ENCODE measurements at regions of chr19 and their contacts with region 1.

Region 1: DNA sequence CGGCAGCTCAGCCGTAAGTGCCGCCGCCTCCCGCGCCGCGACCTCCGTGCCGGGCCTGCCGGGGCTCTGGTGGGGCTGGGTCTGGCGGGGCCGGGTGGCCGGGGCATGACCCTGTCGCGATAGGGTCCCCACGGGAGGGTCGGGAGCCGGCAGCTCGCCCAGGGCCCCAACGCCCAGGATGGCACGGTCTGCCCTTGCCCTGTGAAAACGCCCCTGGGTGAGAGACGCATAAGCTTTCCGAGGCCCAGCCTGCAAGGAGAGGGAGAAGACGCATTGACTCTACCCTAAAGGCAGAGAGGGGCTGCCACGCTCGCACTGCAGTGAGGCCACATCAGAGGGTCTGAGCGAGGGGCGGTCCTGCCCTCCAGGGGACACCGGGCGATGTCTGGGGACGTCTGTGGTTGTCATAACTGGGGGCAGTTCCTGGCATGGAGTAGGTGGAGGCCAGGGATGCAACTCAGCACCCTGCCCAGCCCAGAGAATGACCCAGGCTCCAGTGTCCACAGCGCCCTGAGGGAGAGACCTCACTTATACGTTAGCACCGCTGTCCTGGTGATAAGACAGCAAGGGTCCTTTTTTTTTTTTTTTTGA is 539 bp downstream of the ZNF554 start:
- DNase-seq: no peak
- ATAC-seq: peak; percentile 18
- H3K4me3 ChIP-seq: peak overlapping the region; percentile 64 to 83 (median 74)
- H3K27ac ChIP-seq: peak overlapping the region; percentile 36 to 78 (median 62)
- H3K4me1 ChIP-seq: peaks cover 0 to 8% of the 10 kb centered on the region in 2 donors
- H3K27me3 ChIP-seq: no peaks in the 10 kb centered on the region
- CTCF ChIP-seq: no peak
- POLR2A ChIP-seq: no peak

Region 2: DNA sequence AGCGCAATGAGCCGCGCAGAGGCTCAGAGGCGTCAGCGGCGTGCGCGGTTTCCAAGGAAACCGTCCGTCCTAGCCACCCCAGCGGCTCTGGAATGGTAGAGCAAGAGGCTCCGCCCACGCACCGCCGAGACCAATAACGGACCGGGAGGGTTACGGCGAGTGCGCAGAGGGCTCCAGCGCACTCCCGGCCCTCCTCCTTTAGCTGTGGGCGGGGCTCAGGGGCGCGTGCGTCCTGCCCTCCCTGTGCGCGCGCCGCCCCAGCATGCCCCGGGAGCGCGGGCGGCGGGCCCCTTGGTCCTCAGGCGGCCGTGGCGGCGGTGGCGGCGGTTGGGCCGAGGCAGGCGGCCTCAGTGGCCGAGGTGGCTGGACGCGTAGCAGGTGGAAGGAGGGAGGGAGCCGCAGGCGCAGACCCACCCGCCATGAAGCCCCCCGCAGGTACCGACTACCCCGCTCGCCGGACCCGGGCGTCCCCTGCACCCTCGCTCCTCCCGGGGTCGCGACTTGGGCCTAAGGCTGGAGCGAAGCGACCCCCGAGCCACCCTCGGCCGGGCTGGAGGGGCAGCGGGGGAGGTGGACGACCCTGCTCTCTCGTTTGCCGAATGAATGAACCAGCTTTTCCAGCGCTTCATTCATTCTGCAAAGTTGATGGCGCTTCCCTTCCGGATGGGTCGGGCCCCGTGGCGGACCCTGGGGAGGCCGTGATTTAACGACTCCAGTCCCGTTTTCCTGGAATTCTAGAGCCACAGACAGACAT is 34.8 kb before region 1 on chr19 and contains the start of gene THOP1:
- in situ Hi-C with region 1: no loop called
- intact Hi-C with region 1: loop called (anchors 1 kb)
- DNase-seq: peak; percentile 95 to 98
- ATAC-seq: peak; percentile 80 to 83
- H3K4me3 ChIP-seq: peak within 1 kb of the TSS; percentile 83 to 97 (median 87)
- H3K27ac ChIP-seq: peak within 1 kb of the TSS; percentile 68 to 78 (median 72)
- H3K4me1 ChIP-seq: peaks cover 41 to 45% of the 10 kb centered on the region in 2 donors
- H3K27me3 ChIP-seq: no peaks in the 10 kb centered on the region
- CTCF ChIP-seq: no peak
- POLR2A ChIP-seq: peak; percentile 33 to 54
- total RNA-seq, gene THOP1: 31.5 to 114 (median 73.0) TPM

Region 3: DNA sequence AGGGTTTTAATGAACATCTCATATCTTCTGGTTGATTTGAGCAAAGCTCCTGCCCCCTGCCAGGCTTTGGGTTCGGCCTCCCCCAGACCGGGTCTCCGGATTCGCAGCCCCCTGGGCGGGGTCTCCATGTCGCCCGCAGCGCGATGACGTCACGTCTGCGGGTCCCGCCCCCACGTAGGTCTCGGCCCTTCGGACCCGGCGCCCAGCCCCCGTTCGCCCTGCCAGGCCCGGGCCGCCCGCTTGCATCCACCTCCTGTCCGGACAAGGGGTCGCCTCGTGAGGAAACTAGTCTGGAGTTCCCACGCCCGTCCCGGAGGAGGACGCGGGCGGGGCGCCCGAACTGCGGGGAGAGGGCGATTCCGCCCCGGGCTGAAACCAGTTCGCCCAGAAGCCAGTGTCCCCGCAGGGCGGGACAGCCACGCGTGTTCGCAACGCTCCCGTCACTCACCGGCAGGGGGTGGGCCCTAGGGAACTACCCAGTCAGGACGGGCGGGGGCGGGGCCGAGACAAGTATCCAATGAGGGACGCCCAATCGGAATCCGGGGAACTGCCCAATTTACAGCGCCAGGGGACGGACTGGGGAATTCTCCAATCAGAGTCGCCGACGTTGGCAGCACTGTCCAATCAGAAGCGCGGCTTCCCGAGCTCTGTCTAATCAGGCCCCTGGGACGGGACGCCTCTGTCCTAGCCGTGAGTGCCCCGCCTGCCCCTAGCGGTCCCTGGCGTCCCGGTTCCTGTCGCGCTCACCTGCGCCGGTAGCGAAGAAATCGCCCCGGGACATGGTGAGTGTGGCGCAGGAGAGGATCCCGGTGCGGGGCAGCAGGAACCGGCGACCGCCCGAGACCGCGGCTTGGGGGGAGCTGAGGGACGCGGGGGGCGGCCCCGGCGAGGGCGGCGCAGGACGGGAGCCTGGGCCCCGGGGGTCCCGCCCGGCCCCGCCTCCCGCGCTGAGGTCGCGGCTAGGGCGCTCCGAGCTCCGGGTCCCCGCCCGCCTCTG is 20.9 kb after region 1 on chr19 and contains the start of gene ZNF555:
- in situ Hi-C with region 1: no loop called
- intact Hi-C with region 1: loop called (anchors 1 kb)
- DNase-seq: peak; percentile 99
- ATAC-seq: peak; percentile 99
- H3K4me3 ChIP-seq: peak within 1 kb of the TSS; percentile 69 to 85 (median 74)
- H3K27ac ChIP-seq: peak within 1 kb of the TSS; percentile 80 to 92 (median 86)
- H3K4me1 ChIP-seq: peaks cover 15 to 20% of the 10 kb centered on the region in 2 donors
- H3K27me3 ChIP-seq: no peaks in the 10 kb centered on the region
- CTCF ChIP-seq: peak; percentile 38 to 75 (median 68)
- POLR2A ChIP-seq: peak; percentile 56 to 79
- total RNA-seq, gene ZNF555: 1.9 to 5.5 (median 2.7) TPM

Region 4: DNA sequence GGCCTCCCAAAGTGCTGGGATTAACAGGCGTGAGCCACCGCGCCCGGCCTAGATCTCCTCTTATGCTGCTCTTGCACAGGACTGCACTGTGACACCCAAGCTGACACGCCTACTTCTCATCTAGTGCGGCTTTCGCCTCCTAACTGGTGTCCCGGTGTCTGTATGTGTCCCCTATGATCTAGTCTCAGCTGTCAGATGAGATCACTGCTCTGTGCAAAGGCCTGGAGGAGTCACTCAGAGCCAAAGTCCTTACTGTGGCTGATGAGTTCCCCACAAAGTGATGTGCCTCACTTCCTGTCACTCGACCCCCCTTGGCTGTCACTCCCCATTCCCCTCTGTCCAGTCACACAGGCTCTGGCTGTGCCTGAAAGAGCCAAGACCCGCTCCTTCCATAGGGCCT is 49.4 kb after region 1 on chr19:
- in situ Hi-C with region 1: loop called in 1 of 4 experiments (anchors 10 kb)
- intact Hi-C with region 1: no loop called
- DNase-seq: no peak
- ATAC-seq: no peak
- H3K4me3 ChIP-seq: no peak overlapping the region
- H3K27ac ChIP-seq: no peak overlapping the region
- H3K4me1 ChIP-seq: no peaks in the 10 kb centered on the region
- H3K27me3 ChIP-seq: no peaks in the 10 kb centered on the region
- CTCF ChIP-seq: no peak
- POLR2A ChIP-seq: no peak

Region 5: DNA sequence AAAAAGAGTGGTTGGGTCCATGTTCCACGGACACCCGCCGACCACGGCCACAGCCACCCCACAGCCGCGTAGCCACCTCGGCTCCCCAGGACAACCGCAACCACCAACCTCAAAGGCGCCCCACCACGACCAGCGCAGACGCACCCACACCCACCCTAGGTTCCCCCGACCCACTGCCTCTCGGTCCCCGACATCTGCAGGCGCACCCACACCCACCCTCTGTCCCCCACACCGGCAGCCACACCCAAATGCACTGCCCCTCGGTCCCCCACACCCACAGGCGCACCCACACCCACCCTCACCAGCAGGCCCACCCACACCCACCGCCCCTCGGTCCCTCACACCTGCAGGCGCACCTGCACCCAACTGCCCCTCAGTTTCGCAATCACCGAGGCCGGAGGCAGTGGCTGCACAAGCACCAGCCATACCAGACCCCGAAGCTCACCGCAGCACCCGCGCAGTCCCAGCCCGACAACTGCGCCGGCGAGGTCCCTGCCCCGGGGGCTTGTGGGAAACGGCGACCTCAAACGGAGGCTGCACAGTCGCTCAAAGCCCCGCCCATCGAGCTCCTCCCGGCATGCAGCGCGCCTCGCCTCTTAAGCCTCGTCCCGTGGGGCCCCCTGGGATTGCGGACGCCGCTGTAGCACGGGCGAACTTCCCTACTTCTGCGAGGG is 106.3 kb after region 1 on chr19:
- in situ Hi-C with region 1: no loop called
- intact Hi-C with region 1: no loop called
- DNase-seq: no peak
- ATAC-seq: no peak
- H3K4me3 ChIP-seq: no peak overlapping the region
- H3K27ac ChIP-seq: no peak overlapping the region
- H3K4me1 ChIP-seq: no peaks in the 10 kb centered on the region
- H3K27me3 ChIP-seq: no peaks in the 10 kb centered on the region
- CTCF ChIP-seq: no peak
- POLR2A ChIP-seq: no peak

Region 6: GRCh38 chr19:3304871-3305423 is 484.7 kb after region 1 on chr19:
- in situ Hi-C with region 1: no loop called
- intact Hi-C with region 1: no loop called
- DNase-seq: peak; percentile 48 to 51
- ATAC-seq: peak; percentile 70 to 75
- H3K4me3 ChIP-seq: no peak overlapping the region
- H3K27ac ChIP-seq: no peak overlapping the region
- H3K4me1 ChIP-seq: peaks cover 3% of the 10 kb centered on the region in 2 donors
- H3K27me3 ChIP-seq: peaks cover 28 to 55% (median 46%) of the 10 kb centered on the region in 3 donors
- CTCF ChIP-seq: peak; percentile 86 to 93 (median 88)
- POLR2A ChIP-seq: no peak